Natural killer cell (primary cell): ENCODE measurements at regions of chr17 and their contacts with region 1.

Region 1: GRCh38 chr17:56779898-56780733 is 53.6 kb downstream of the C17orf67 start:
- DNase-seq: peak; percentile 84 to 92
- ATAC-seq: peak; percentile 98 to 100 (median 99)
- H3K4me3 ChIP-seq: peak overlapping the region; percentile 2
- H3K4me3 Mint-ChIP-seq: peak overlapping the region; percentile 89
- H3K27ac ChIP-seq: no peak overlapping the region
- H3K27ac Mint-ChIP-seq: peak overlapping the region in 1 of 2 donors; percentile 72
- H3K4me1 ChIP-seq: peaks cover 10% of the 10 kb centered on the region
- H3K4me1 Mint-ChIP-seq: peaks cover 18 to 19% of the 10 kb centered on the region in 2 donors
- H3K27me3 ChIP-seq: peaks cover 16% of the 10 kb centered on the region
- H3K27me3 Mint-ChIP-seq: peaks cover 49 to 58% of the 10 kb centered on the region in 2 donors
- CTCF ChIP-seq: peak; percentile 98

Region 2: DNA sequence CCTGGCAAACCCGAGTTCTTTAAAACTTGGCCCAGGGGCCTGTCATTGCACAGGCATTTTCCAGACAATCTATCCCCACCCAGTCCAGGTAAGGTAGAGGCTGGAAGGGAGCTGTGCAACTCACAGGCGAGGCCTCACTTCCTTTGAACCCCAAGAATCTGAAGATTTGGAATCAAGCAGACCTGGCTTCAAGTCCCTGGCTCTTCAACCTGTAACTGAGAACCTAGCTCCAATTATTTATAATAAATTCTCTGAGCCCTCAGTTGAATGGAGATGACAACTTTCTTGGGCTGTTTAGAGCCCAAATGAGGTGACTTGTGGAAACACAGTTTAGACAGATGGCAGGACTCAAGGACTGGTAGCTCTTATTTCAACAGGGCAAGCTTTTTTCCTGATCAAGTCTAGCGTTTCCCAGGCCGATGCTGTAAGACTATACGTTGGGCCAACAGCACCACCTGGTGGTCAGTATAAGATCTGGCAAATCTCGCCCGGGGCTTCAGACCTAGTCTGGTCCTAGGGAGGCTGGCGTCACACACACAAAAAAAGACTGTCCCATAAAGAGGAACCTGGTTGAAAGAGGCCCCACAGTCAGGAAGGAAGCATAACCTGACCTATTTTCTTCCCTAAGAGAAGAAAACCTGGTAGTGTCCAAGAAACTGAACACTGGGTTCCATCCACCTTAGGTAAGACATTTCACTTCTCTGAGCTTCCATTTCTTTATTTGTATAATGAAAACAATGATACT is 64.3 kb before region 1 on chr17:
- intact Hi-C with region 1: loop called (anchors 2 kb)
- DNase-seq: peak; percentile 59 to 88
- ATAC-seq: peak; percentile 83 to 98 (median 90)
- H3K4me3 ChIP-seq: no peak overlapping the region
- H3K4me3 Mint-ChIP-seq: no peak overlapping the region
- H3K27ac ChIP-seq: no peak overlapping the region
- H3K27ac Mint-ChIP-seq: no peak overlapping the region
- H3K4me1 ChIP-seq: no peaks in the 10 kb centered on the region
- H3K4me1 Mint-ChIP-seq: no peaks in the 10 kb centered on the region
- H3K27me3 ChIP-seq: peaks cover 6% of the 10 kb centered on the region
- H3K27me3 Mint-ChIP-seq: peaks cover 32 to 62% of the 10 kb centered on the region in 2 donors
- CTCF ChIP-seq: peak; percentile 82

Region 3: DNA sequence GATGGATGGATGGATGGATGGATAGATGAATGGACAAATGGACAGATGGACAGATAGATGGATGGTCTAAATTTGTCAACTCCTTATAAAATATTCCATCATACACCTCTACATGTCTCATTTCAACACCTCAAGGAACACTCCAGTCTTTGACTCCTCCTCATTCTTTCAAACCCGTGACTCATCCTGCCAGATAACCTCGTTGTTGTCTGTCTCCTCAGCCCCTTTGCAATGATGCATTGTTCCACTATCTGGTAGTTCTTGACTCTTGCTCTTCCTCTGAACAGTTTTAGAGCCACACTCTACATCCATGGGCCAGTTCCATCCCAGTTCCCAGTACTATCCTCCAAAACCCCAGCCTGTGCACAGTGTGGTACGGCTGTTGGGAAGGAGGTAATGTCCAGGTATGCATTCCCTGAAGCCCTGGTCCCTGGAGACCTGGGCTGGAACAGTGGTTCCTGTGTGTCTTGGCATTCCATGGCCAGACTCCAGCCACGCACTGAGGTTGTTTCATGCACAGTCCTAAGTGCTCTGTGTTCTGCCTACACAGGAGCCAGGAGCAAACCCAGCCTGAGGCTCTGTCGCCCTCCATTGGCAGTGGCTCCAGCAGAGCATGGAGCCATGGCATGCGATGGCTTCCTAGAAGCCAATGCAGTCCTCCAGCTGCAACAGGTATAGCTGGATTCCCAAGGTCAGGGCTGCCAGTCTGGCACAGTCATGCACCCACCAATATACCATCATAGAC is 52.1 kb before region 1 on chr17:
- intact Hi-C with region 1: no loop called
- DNase-seq: no peak
- ATAC-seq: no peak
- H3K4me3 ChIP-seq: no peak overlapping the region
- H3K4me3 Mint-ChIP-seq: no peak overlapping the region
- H3K27ac ChIP-seq: no peak overlapping the region
- H3K27ac Mint-ChIP-seq: no peak overlapping the region
- H3K4me1 ChIP-seq: no peaks in the 10 kb centered on the region
- H3K4me1 Mint-ChIP-seq: no peaks in the 10 kb centered on the region
- H3K27me3 ChIP-seq: no peaks in the 10 kb centered on the region
- H3K27me3 Mint-ChIP-seq: peaks cover 30 to 63% of the 10 kb centered on the region in 2 donors
- CTCF ChIP-seq: no peak